Activated naive CD4-positive, alpha-beta T cell treated with anti-CD3 and anti-CD28 coated beads, Interleukin-2, amount 10 ng/mL, durations not matched to agents 7 days and 5 days (primary cell): ENCODE measurements at regions of chr12 and their contacts with region 1.

Region 1: DNA sequence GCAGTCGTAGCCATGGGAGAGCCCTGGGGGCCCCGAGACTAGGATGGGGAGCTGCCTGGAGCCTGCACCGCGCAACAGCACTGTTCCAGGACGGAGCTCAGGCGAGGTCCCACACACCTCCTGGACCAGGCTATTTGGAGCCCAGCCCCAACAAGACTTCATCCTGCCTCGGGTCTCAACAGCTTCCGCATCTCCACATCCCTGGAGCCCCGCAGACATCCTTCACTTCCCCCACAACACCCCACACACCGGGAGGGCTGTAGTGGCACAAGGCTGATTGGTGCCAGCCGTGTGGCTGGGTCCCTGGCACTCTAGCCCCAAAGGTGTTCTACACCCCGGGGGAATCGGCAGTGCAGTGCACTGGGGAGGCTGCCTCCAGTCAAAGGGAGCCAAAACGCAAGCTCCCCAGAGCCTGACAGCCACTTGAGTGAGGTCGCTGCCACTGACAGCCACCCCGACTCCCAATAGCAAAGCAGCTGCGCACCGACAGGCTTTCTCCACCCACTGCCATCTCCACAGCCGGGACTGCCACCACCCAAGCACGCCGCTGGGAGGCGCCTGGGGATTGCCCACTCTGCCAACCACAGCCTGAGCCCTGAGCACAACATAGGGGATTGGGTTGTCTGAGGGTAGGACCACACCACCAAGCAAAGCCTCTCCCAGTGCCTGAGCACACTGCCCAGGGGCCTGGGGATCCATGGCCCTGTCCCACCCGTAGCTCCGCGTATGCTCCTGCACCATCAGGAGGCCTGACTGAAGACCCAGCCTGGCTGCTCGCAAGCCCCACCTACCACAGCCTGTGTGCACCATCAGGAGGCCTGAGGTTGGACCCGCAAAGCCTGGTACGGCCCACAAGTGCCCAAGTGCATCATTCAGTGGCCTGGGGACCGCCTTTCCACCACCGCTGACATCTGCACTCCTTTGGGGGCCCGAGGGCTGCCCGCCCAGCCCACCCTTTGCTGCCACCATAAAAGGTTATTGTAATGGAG is 13.2 kb upstream of the KLRF1 start:
- DNase-seq: peak; percentile 93
- H3K4me3 Mint-ChIP-seq: peak overlapping the region; percentile 81
- H3K27ac Mint-ChIP-seq: peak overlapping the region; percentile 77
- H3K4me1 Mint-ChIP-seq: peaks cover 26% of the 10 kb centered on the region
- H3K27me3 Mint-ChIP-seq: peaks cover 34% of the 10 kb centered on the region

Region 2: GRCh38 chr12:8796831-8797626 is 1017.1 kb before region 1 on chr12:
- CTCF ChIA-PET with region 1: no interaction called
- DNase-seq: no peak
- H3K4me3 Mint-ChIP-seq: no peak overlapping the region
- H3K27ac Mint-ChIP-seq: no peak overlapping the region
- H3K4me1 Mint-ChIP-seq: no peaks in the 10 kb centered on the region
- H3K27me3 Mint-ChIP-seq: no peaks in the 10 kb centered on the region

Region 3: DNA sequence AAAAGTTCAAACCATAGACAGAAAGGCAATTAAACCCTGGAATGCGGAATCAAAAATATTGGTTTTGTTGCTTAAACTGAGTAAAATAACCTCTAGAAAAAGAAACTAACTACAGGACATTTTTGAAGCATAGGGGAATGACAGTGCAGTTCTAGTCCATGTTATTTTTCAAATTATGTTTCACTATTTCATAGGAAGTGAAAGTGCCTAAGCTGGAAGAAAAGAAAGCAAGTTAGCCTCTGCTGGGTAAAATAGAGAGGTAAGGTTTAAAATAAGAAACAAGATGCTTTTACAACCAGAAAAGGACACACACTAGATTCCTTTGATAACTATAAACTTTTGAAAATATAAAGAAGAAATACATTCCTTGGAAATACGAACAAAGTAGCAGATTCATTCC is 82.3 kb before region 1 on chr12:
- CTCF ChIA-PET with region 1: no interaction called
- DNase-seq: no peak
- H3K4me3 Mint-ChIP-seq: peak overlapping the region; percentile 67
- H3K27ac Mint-ChIP-seq: peak overlapping the region; percentile 77
- H3K4me1 Mint-ChIP-seq: peaks cover 53% of the 10 kb centered on the region
- H3K27me3 Mint-ChIP-seq: no peaks in the 10 kb centered on the region

Region 4: GRCh38 chr12:9750276-9751203 is 63.6 kb before region 1 on chr12:
- CTCF ChIA-PET with region 1: interaction called, 56 read pairs
- DNase-seq: peak; percentile 62
- H3K4me3 Mint-ChIP-seq: peak overlapping the region; percentile 48
- H3K27ac Mint-ChIP-seq: peak overlapping the region; percentile 94
- H3K4me1 Mint-ChIP-seq: peaks cover 65% of the 10 kb centered on the region
- H3K27me3 Mint-ChIP-seq: peaks cover 4% of the 10 kb centered on the region

Region 5: GRCh38 chr12:9925708-9926393 is 111.7 kb after region 1 on chr12:
- CTCF ChIA-PET with region 1: interaction called, 21 read pairs
- DNase-seq: no peak
- H3K4me3 Mint-ChIP-seq: peak overlapping the region; percentile 60
- H3K27ac Mint-ChIP-seq: no peak overlapping the region
- H3K4me1 Mint-ChIP-seq: peaks cover 23% of the 10 kb centered on the region
- H3K27me3 Mint-ChIP-seq: peaks cover 11% of the 10 kb centered on the region

Region 6: GRCh38 chr12:10012630-10013330 is 198.7 kb after region 1 on chr12:
- CTCF ChIA-PET with region 1: interaction called, 12 read pairs
- DNase-seq: no peak
- H3K4me3 Mint-ChIP-seq: no peak overlapping the region
- H3K27ac Mint-ChIP-seq: no peak overlapping the region
- H3K4me1 Mint-ChIP-seq: no peaks in the 10 kb centered on the region
- H3K27me3 Mint-ChIP-seq: peaks cover 15% of the 10 kb centered on the region

Region 7: GRCh38 chr12:10600988-10601387 is 786.9 kb after region 1 on chr12:
- CTCF ChIA-PET with region 1: no interaction called
- DNase-seq: no peak
- H3K4me3 Mint-ChIP-seq: no peak overlapping the region
- H3K27ac Mint-ChIP-seq: no peak overlapping the region
- H3K4me1 Mint-ChIP-seq: no peaks in the 10 kb centered on the region
- H3K27me3 Mint-ChIP-seq: no peaks in the 10 kb centered on the region